ENCODE measurements at regions of chr19 and their contacts with region 1.

Region 1: DNA sequence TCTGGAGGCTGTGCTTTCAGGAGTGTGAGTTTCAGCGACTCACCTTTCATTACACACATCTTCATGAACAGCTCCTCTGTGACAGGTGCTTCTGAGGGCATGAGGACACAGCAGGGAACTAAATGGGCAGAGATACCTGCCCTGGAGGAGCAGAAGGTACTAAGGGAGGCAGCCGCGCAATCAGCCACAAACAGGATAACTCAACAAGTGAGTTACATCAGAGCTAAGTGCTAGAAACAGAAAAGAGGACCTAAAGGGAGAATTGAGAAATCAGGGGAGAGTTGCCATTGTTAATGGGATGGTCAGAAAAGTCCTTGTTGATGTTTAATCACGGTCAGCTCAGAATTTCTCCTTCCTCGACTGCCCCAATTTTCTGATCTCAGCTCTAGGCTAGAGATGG is 42.5 kb downstream of the SYDE1 start:
- DNase-seq: no peak
- H3K4me3 ChIP-seq: no peak overlapping the region
- H3K27ac ChIP-seq: no peak overlapping the region
- H3K4me1 ChIP-seq: no peaks in the 10 kb centered on the region
- H3K27me3 ChIP-seq: no peaks in the 10 kb centered on the region
- CTCF ChIP-seq: no peak
- POLR2A ChIP-seq: no peak

Region 2: DNA sequence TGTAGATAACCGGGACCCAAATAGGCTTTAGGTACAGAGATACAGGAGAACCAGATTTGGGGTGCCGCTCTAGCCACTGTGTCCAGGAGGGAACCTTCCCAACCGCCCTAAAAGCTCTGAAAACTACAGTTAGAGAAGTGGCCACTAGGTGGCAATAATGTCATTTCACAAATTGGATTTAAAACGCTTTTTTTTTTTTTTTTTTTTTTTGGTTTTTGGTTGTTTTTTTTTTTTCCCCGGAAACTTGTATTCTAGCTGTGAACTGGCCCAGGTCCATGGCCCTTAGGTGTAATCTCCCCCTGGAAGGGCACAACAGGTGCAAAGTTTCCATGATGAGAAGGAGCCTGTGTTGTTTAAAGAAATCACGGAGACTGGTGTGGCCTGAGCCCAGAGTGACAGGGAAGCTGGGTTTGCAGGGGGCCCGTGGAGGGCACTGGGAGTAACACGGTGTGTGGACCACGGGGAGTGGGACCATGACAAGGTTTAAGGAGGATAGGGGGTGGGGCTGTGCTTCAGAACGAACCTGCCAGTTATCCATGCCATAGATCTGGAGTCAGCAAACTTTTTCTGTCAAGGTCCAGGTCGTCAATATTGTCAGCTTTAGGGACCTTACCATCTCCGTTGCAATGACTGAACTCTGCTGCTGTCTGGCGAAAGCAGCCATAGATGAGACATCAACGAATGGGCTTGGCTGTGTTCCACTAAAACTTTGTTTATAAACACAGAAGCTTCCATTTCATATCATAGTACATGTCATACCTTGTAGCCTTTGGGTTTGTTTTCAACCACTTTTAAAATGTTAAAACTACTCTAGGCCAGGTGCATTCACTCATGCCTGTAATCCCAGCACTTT is 57.6 kb before region 1 on chr19:
- intact Hi-C with region 1: loop called (anchors 2 kb)
- DNase-seq: peak; percentile 59
- H3K4me3 ChIP-seq: no peak overlapping the region
- H3K27ac ChIP-seq: no peak overlapping the region
- H3K4me1 ChIP-seq: no peaks in the 10 kb centered on the region
- H3K27me3 ChIP-seq: no peaks in the 10 kb centered on the region
- CTCF ChIP-seq: peak; percentile 40 to 54 (median 51)
- POLR2A ChIP-seq: no peak

Measured in prostate gland (tissue), 2 donors.